PC-9 (cell line): ENCODE measurements at regions of chr5 and their contacts with region 1.

Region 1: GRCh38 chr5:81800797-81801196 is 49.9 kb upstream of the SSBP2 start:
- DNase-seq: peak; percentile 44 to 76
- H3K4me3 ChIP-seq: no peak overlapping the region; the same call in 1 of the 2 replicates
- H3K27ac ChIP-seq: peak overlapping the region; percentile 54
- H3K4me1 ChIP-seq: peaks cover 25% of the 10 kb centered on the region
- H3K27me3 ChIP-seq: no peaks in the 10 kb centered on the region
- CTCF ChIP-seq: no peak

Region 2: GRCh38 chr5:81779125-81779915 is 21.5 kb before region 1 on chr5:
- CTCF ChIA-PET with region 1: no interaction called
- POLR2A ChIA-PET with region 1: no interaction called
- intact Hi-C with region 1: no loop called
- DNase-seq: peak in 1 of 2 experiments; percentile 34
- H3K4me3 ChIP-seq: no peak overlapping the region
- H3K27ac ChIP-seq: no peak overlapping the region
- H3K4me1 ChIP-seq: no peaks in the 10 kb centered on the region
- H3K27me3 ChIP-seq: no peaks in the 10 kb centered on the region
- CTCF ChIP-seq: no peak

Region 3: GRCh38 chr5:81819556-81820317 is 18.9 kb after region 1 on chr5:
- CTCF ChIA-PET with region 1: no interaction called
- POLR2A ChIA-PET with region 1: no interaction called
- intact Hi-C with region 1: loop called (anchors 2 kb)
- DNase-seq: peak; percentile 16 to 84
- H3K4me3 ChIP-seq: no peak overlapping the region
- H3K27ac ChIP-seq: peak overlapping the region; percentile 72
- H3K4me1 ChIP-seq: peaks cover 30% of the 10 kb centered on the region
- H3K27me3 ChIP-seq: no peaks in the 10 kb centered on the region
- CTCF ChIP-seq: no peak

Region 4: DNA sequence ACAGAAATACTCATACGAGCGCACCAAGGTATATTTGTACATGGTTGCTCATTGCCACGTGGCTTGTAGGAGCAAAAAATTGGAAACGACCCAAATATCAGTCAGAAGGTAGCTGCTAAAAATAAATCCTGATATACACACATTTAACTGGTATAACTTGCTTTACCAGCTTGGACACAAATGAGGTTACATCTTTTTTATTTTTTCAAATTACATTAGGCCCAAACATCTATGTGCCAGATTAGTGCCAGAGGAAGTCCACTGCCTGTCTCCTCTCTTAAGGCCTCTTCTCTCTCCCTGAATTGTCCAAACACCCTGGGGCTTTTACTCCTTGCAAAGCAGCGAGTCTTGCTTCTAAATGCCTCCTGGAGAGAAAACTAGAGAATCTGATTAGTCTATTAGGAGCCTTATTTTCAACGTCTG is 42.1 kb after region 1 on chr5:
- CTCF ChIA-PET with region 1: interaction called, 3 read pairs
- POLR2A ChIA-PET with region 1: no interaction called
- intact Hi-C with region 1: loop called (anchors 1 kb)
- DNase-seq: peak; percentile 20 to 94
- H3K4me3 ChIP-seq: peak overlapping the region; percentile 46
- H3K27ac ChIP-seq: peak overlapping the region; percentile 74
- H3K4me1 ChIP-seq: peaks cover 27% of the 10 kb centered on the region
- H3K27me3 ChIP-seq: no peaks in the 10 kb centered on the region
- CTCF ChIP-seq: no peak